ENCODE measurements at regions of chr6 and their contacts with region 1.

Region 1: GRCh38 chr6:108782179-108783041 is 65.8 kb upstream of the ARMC2 start:
- DNase-seq: peak; percentile 92
- ATAC-seq: peak; percentile 89
- H3K4me3 ChIP-seq: peak overlapping the region; percentile 72
- H3K27ac ChIP-seq: peak overlapping the region; percentile 90
- H3K4me1 ChIP-seq: peaks cover 20% of the 10 kb centered on the region
- H3K27me3 ChIP-seq: no peaks in the 10 kb centered on the region
- CTCF ChIP-seq: peak; percentile 78

Region 2: DNA sequence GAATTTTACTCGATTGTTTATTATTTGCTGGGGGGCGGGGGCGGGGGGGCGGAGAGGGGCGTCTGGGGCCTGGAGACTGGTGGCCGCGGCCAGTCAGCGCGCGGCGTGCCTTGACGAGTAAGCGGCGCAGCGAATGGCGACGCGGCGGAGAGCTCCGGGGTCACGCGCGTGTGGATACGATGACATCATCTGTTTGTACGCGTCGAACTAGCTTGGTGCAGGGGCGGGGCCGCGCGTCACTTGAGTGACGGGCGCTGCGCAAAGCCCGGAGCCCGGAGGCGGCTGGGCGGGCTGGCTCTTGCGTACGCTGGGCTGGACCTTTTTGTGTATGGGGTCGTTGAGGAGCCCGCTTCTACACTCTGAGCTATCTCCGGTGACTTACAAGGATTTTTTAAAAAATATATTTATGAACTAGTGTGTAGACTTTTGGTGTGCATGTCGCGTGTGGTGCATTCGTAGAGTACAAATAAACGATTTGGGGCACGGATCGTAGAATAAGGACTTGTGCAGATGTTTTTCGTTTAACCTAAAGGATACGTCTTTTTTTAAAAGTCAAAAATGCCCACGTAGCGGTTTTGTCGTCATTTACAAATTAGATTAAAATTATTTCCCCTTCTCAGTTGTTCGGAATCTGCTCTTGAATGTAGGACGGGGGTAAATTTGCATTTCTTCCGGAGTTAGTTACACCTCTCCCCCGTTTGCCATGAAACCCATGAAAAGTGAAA is 223.9 kb before region 1 on chr6:
- CTCF ChIA-PET with region 1: no interaction called
- POLR2A ChIA-PET with region 1: no interaction called
- intact Hi-C with region 1: loop called (anchors 1 kb)
- DNase-seq: peak; percentile 96
- ATAC-seq: peak; percentile 41
- H3K4me3 ChIP-seq: peak overlapping the region; percentile 95
- H3K27ac ChIP-seq: peak overlapping the region; percentile 44; the same call in 1 of the 2 replicates
- H3K4me1 ChIP-seq: peaks cover 10% of the 10 kb centered on the region
- H3K27me3 ChIP-seq: no peaks in the 10 kb centered on the region
- CTCF ChIP-seq: no peak

Region 3: DNA sequence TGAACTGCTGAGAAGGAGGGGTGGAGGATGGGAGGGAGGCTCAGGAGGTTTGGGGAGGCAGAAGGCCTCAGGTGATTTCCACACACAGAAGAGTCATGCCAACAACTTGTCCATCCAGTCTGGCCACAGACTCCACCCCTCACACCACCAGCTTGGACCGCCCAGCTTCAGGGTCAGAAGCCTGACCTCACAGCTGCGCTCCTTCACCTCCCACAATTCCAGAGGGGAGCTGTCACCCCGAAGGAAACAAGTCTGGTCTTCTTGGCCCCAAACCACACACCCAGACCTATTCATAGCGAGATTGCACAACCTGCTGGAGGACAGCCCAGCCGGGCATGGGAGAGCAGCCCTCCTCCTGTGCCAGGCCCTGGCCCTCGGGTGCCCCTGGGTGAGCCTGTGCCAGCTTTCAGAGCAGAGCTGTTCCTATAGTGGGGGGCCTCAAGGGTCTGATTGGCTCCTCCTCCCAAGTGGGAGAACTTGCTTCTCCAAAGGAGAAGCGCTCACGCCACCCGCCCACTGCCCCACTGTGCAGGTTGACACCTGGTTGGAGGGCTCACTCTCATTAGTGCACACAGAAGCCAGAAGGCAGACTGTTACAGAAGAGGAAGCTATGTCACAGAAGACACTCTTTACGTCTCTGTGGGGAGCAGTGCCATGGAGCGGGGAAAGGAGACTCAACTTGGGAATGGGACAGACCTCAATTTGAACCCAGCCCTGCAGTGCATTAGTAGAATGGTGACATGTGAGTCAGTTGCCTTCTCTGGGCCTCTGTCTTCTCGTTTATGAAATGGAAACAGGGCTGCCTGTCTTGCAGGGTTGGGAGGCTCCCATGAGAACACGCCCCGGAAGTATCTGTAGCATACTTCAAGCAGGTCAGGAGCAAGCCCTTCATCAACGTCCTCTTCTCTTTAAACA is 92.9 kb before region 1 on chr6:
- CTCF ChIA-PET with region 1: no interaction called
- POLR2A ChIA-PET with region 1: no interaction called
- intact Hi-C with region 1: loop called (anchors 5 kb)
- DNase-seq: peak; percentile 92
- ATAC-seq: peak; percentile 63
- H3K4me3 ChIP-seq: no peak overlapping the region
- H3K27ac ChIP-seq: peak overlapping the region; percentile 76
- H3K4me1 ChIP-seq: peaks cover 56% of the 10 kb centered on the region
- H3K27me3 ChIP-seq: no peaks in the 10 kb centered on the region
- CTCF ChIP-seq: no peak

Region 4: DNA sequence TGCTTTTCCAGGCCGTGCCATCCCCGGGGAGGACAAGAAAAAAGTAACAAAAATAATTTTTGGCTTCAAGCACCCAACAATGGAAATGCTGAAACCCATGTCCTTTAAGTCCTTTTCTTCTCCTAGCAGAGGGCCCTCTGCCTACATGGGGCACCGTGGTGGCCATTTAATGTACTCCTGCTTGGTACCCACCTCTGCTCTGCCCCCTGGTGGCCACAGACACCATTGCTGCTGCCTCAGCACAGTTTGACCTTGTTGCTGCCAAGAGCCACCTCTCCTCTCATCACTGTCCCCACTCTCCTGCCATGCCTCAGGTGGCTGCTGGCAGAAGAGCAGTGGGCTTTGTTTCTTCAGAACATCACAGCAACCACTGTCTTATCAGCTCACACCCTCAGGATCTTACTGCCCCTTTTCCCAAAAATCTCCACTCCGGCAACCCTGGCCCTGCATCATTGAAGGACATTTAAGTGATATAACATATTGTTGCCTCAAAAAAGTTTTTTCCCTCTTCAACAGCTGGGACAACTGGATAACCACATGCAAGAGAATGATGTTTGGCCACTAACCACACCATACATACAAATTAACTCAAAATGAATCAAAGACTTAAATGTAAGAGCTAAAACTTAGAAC is 52.9 kb after region 1 on chr6:
- CTCF ChIA-PET with region 1: no interaction called
- POLR2A ChIA-PET with region 1: no interaction called
- intact Hi-C with region 1: loop called (anchors 2 kb)
- DNase-seq: peak; percentile 78
- ATAC-seq: peak; percentile 95
- H3K4me3 ChIP-seq: no peak overlapping the region
- H3K27ac ChIP-seq: no peak overlapping the region
- H3K4me1 ChIP-seq: 0 out of 2 replicates have a peak, but pooled peaks cover 6% of the 10 kb centered on the region
- H3K27me3 ChIP-seq: no peaks in the 10 kb centered on the region
- CTCF ChIP-seq: peak; percentile 82

Region 5: DNA sequence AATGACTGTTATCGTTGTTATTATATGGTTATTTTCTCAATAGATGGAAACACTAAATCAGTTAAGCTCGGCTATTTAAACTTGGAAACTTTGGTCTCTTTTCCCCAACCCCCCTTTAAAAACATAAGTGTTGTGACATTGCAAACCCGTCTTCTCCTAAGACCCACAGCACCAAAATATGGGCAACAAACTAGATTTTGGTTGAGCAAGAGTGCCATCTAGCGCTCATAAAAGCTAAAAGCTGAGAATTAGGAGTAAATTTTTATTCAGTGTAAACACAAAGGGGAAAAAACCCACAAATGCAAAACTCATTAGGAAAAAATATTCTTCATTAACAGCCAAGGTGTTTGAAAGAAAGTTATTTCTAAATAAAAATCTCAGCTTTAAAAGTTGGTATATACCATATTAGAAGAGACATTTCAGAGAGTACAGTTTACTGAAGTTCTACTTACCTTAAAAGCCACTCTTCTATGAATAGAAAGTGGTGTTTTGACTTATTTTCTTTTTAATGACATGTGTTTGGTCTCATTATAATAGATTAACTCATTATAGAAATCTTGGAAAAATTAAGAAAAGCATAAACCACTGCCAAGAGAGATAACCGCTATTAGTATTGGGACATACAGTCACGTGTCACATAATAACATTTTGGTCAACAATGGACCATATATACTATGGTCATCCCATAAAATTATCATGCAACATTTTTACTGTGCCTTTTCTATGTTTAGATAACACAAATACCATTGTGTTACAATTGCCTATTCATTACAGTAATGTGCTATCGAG is 291.1 kb after region 1 on chr6:
- CTCF ChIA-PET with region 1: no interaction called
- POLR2A ChIA-PET with region 1: no interaction called
- intact Hi-C with region 1: loop called (anchors 1 kb)
- DNase-seq: peak; percentile 74
- ATAC-seq: no peak; the same call in 1 of the 2 replicates
- H3K4me3 ChIP-seq: no peak overlapping the region
- H3K27ac ChIP-seq: no peak overlapping the region
- H3K4me1 ChIP-seq: 0 out of 2 replicates have a peak, but pooled peaks cover 4% of the 10 kb centered on the region
- H3K27me3 ChIP-seq: no peaks in the 10 kb centered on the region
- CTCF ChIP-seq: peak; percentile 72